ENCODE measurements at regions of chr6 and their contacts with region 1.

Region 1: GRCh38 chr6:72769459-72770125 is 147.7 kb downstream of the KCNQ5 start:
- DNase-seq: no peak
- ATAC-seq: no peak
- H3K4me3 ChIP-seq: no peak overlapping the region
- H3K27ac ChIP-seq: no peak overlapping the region
- H3K4me1 ChIP-seq: no peaks in the 10 kb centered on the region
- H3K27me3 ChIP-seq: no peaks in the 10 kb centered on the region
- CTCF ChIP-seq: no peak
- POLR2A ChIP-seq: no peak
- RAD21 ChIP-seq: no peak

Region 2: GRCh38 chr6:72728706-72729343 is 40.8 kb before region 1 on chr6:
- CTCF ChIA-PET with region 1: no interaction called
- POLR2A ChIA-PET with region 1: no interaction called
- dilution Hi-C with region 1: no loop called
- in situ Hi-C with region 1: no loop called
- intact Hi-C with region 1: loop called (anchors 2 kb)
- DNase-seq: no peak
- ATAC-seq: no peak
- H3K4me3 ChIP-seq: no peak overlapping the region
- H3K27ac ChIP-seq: no peak overlapping the region
- H3K4me1 ChIP-seq: no peaks in the 10 kb centered on the region
- H3K27me3 ChIP-seq: no peaks in the 10 kb centered on the region
- CTCF ChIP-seq: no peak
- POLR2A ChIP-seq: no peak
- RAD21 ChIP-seq: no peak